ENCODE measurements at regions of chr3 and their contacts with region 1.

Region 1: GRCh38 chr3:119559441-119559963 is at the start of gene CD80:
- DNase-seq: peak; percentile 82
- ATAC-seq: peak; percentile 72
- H3K4me3 ChIP-seq: peak within 1 kb of the TSS; percentile 76
- H3K27ac ChIP-seq: peak within 1 kb of the TSS; percentile 98
- H3K4me1 ChIP-seq: peaks cover 22% of the 10 kb centered on the region
- H3K27me3 ChIP-seq: no peaks in the 10 kb centered on the region
- CTCF ChIP-seq: peak; percentile 66 to 81 (median 68)
- EP300 ChIP-seq: peak in 1 of 2 experiments; percentile 22; a peak in 1 of 4 replicates
- POLR2A ChIP-seq: peak; percentile 67; the same call in 1 of the 2 replicates
- RAD21 ChIP-seq: peak; percentile 67
- polyA plus RNA-seq, gene CD80: 42.5 to 54.1 TPM

Region 2: DNA sequence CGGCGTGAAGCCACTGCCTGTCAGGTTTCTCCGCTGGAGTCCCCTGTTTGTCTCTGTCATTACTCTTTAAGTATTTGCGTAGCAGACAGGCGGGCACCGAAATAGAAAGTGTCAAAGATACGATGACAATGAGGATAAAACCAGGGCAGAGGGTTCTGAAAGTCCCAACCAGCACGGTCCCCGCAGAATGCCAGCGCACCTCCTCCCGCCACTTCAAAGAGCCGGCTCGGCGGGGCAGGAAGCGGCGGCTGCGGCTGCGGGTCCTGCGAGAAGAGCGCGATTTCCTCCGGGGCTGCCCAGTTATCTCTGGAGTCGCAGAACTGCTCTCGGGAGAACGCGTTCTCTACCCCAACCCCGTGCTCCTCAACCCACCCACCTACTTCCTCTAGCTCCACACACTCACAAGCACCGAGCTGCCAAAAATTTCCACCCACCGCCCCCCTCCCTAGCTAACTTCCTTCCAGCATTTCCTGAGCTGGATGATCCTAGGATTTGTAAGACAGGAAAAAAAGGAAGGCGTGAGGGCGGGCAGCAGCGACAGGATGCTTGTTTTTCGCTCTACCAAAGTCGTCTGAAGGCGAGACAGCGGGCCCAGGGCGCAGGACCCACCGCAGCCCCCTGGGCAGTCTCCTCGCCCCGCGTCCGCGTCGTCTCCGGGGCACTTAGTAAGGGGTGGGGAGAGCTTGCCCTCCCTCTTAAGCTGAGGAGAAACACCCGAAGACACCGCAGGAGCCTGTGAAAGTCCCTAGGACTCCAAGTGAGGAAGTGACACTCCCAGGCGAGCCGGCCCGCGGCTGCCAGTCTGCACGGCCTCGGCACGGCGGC is 265.4 kb before region 1 on chr3 and contains the start of gene ARHGAP31:
- CTCF ChIA-PET with region 1: interaction called, 3 read pairs
- POLR2A ChIA-PET with region 1: interaction called, 4 read pairs
- RAD21 ChIA-PET with region 1: interaction called, 3 read pairs
- SMC1A ChIA-PET with region 1: interaction called, 3 read pairs
- in situ Hi-C with region 1: no loop called
- intact Hi-C with region 1: loop called (anchors 2 kb)
- DNase-seq: peak; percentile 62
- ATAC-seq: peak; percentile 82
- H3K4me3 ChIP-seq: peak within 1 kb of the TSS; percentile 94
- H3K27ac ChIP-seq: peak within 1 kb of the TSS; percentile 96
- H3K4me1 ChIP-seq: peaks cover 27% of the 10 kb centered on the region
- H3K27me3 ChIP-seq: no peaks in the 10 kb centered on the region
- CTCF ChIP-seq: no peak
- EP300 ChIP-seq: peak in 1 of 2 experiments; percentile 14; a peak in 1 of 4 replicates
- POLR2A ChIP-seq: peak; percentile 81
- RAD21 ChIP-seq: no peak
- polyA plus RNA-seq, gene ARHGAP31: 0.97 to 1.6 TPM

Region 3: DNA sequence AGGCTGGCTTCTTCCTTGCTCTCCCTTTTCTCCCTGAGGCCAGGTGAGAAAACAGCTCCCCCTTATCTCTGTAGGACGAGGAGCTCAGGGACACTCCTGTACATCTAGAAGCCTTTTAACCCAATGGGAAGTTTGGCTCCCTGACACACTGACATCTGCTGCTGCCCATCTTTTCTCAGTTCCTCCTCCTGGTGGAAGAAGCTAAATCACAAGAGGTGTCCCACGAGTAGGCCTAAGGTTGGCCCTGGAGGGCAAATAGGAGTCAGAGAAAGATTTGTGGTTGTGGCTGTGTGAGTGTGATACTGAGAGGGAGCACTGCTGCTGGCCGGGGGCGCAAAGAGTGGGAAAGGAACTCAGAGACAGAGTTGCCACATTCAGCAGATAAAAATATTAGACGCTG is 215.8 kb before region 1 on chr3:
- CTCF ChIA-PET with region 1: no interaction called
- POLR2A ChIA-PET with region 1: no interaction called
- RAD21 ChIA-PET with region 1: no interaction called
- SMC1A ChIA-PET with region 1: no interaction called
- in situ Hi-C with region 1: no loop called
- intact Hi-C with region 1: no loop called
- DNase-seq: no peak
- ATAC-seq: peak; percentile 89
- H3K4me3 ChIP-seq: no peak overlapping the region
- H3K27ac ChIP-seq: no peak overlapping the region
- H3K4me1 ChIP-seq: peaks cover 7% of the 10 kb centered on the region
- H3K27me3 ChIP-seq: no peaks in the 10 kb centered on the region
- CTCF ChIP-seq: peak in 2 of 3 experiments; percentile 8 to 16; a peak in 3 of 6 replicates
- EP300 ChIP-seq: no peak
- POLR2A ChIP-seq: no peak
- RAD21 ChIP-seq: 0 out of 2 replicates have a peak, but pooled peaks have one; percentile 32

Region 4: GRCh38 chr3:119469381-119470189 is 89.9 kb before region 1 on chr3:
- CTCF ChIA-PET with region 1: interaction called, 10 read pairs
- POLR2A ChIA-PET with region 1: interaction called, 9 read pairs
- RAD21 ChIA-PET with region 1: interaction called, 7 read pairs
- SMC1A ChIA-PET with region 1: interaction called, 7 read pairs
- in situ Hi-C with region 1: no loop called
- intact Hi-C with region 1: loop called (anchors 2 kb)
- DNase-seq: peak; percentile 25
- ATAC-seq: peak; percentile 74
- H3K4me3 ChIP-seq: peak overlapping the region; percentile 90
- H3K27ac ChIP-seq: peak overlapping the region; percentile 96
- H3K4me1 ChIP-seq: no peaks in the 10 kb centered on the region
- H3K27me3 ChIP-seq: no peaks in the 10 kb centered on the region
- CTCF ChIP-seq: no peak
- EP300 ChIP-seq: 0 out of 4 replicates have a peak, but pooled peaks of 1 of the 2 experiments have one; percentile 14
- POLR2A ChIP-seq: no peak
- RAD21 ChIP-seq: no peak

Region 5: GRCh38 chr3:119570216-119570615 is 10.7 kb after region 1 on chr3:
- CTCF ChIA-PET with region 1: interaction called, 5 read pairs
- POLR2A ChIA-PET with region 1: interaction called, 3 read pairs
- RAD21 ChIA-PET with region 1: interaction called, 4 read pairs
- SMC1A ChIA-PET with region 1: interaction called, 10 read pairs
- in situ Hi-C with region 1: no loop called
- intact Hi-C with region 1: no loop called
- DNase-seq: no peak
- ATAC-seq: peak; percentile 96
- H3K4me3 ChIP-seq: no peak overlapping the region
- H3K27ac ChIP-seq: peak overlapping the region; percentile 69
- H3K4me1 ChIP-seq: peaks cover 14% of the 10 kb centered on the region
- H3K27me3 ChIP-seq: no peaks in the 10 kb centered on the region
- CTCF ChIP-seq: no peak
- EP300 ChIP-seq: 0 out of 4 replicates have a peak, but pooled peaks of 1 of the 2 experiments have one; percentile 18
- POLR2A ChIP-seq: no peak
- RAD21 ChIP-seq: no peak

Region 6: GRCh38 chr3:119594076-119594475 is 34.6 kb after region 1 on chr3:
- CTCF ChIA-PET with region 1: interaction called, 60 read pairs
- POLR2A ChIA-PET with region 1: interaction called, 104 read pairs
- RAD21 ChIA-PET with region 1: interaction called, 239 read pairs
- SMC1A ChIA-PET with region 1: interaction called, 151 read pairs
- in situ Hi-C with region 1: no loop called
- intact Hi-C with region 1: loop called (anchors 1 kb)
- DNase-seq: no peak
- ATAC-seq: no peak
- H3K4me3 ChIP-seq: no peak overlapping the region
- H3K27ac ChIP-seq: no peak overlapping the region
- H3K4me1 ChIP-seq: peaks cover 36% of the 10 kb centered on the region
- H3K27me3 ChIP-seq: no peaks in the 10 kb centered on the region
- CTCF ChIP-seq: no peak
- EP300 ChIP-seq: no peak
- POLR2A ChIP-seq: no peak
- RAD21 ChIP-seq: no peak

Region 7: DNA sequence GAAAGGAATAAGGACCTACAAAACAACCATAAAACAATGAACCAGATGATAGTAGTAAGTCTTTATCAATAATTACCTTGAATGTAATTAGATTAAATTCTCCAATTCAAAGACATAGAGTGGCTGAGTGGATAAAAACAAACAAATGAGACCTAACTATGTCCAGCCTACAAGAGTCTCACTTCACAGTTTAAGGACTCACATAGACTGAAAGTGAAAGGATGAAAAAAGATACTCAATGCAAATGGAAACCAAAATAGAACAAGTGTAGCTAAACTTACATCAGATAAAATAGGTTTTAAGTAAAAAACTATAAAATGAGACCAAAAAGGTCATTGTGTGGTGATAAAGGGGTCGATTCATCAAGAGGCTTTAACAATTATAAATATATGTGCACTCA is 200.5 kb after region 1 on chr3:
- CTCF ChIA-PET with region 1: no interaction called
- POLR2A ChIA-PET with region 1: no interaction called
- RAD21 ChIA-PET with region 1: no interaction called
- SMC1A ChIA-PET with region 1: no interaction called
- in situ Hi-C with region 1: no loop called
- intact Hi-C with region 1: no loop called
- DNase-seq: no peak
- ATAC-seq: peak; percentile 90
- H3K4me3 ChIP-seq: no peak overlapping the region
- H3K27ac ChIP-seq: no peak overlapping the region
- H3K4me1 ChIP-seq: no peaks in the 10 kb centered on the region; the same call in 1 of the 2 replicates
- H3K27me3 ChIP-seq: no peaks in the 10 kb centered on the region
- CTCF ChIP-seq: no peak
- EP300 ChIP-seq: no peak
- POLR2A ChIP-seq: no peak
- RAD21 ChIP-seq: no peak

Region 8: GRCh38 chr3:120095226-120095978 is 535.9 kb after region 1 on chr3:
- CTCF ChIA-PET with region 1: no interaction called
- POLR2A ChIA-PET with region 1: no interaction called
- RAD21 ChIA-PET with region 1: no interaction called
- SMC1A ChIA-PET with region 1: no interaction called
- in situ Hi-C with region 1: no loop called
- intact Hi-C with region 1: loop called (anchors 10 kb)
- DNase-seq: peak; percentile 68
- ATAC-seq: peak; percentile 66
- H3K4me3 ChIP-seq: peak overlapping the region; percentile 93
- H3K27ac ChIP-seq: peak overlapping the region; percentile 94
- H3K4me1 ChIP-seq: no peaks in the 10 kb centered on the region
- H3K27me3 ChIP-seq: no peaks in the 10 kb centered on the region
- CTCF ChIP-seq: no peak
- EP300 ChIP-seq: peak; percentile 5 to 72; a peak in 3 of 4 replicates
- POLR2A ChIP-seq: peak; percentile 92
- RAD21 ChIP-seq: no peak